Calu3 (cell line): ENCODE measurements at regions of chr6 and their contacts with region 1.

Region 1: GRCh38 chr6:163191704-163192537 is 222.6 kb upstream of the QKI start:
- DNase-seq: no peak
- H3K4me3 Mint-ChIP-seq: no peak overlapping the region
- H3K27ac Mint-ChIP-seq: no peak overlapping the region
- H3K4me1 Mint-ChIP-seq: no peaks in the 10 kb centered on the region
- H3K27me3 Mint-ChIP-seq: no peaks in the 10 kb centered on the region
- CTCF ChIP-seq: no peak

Region 2: DNA sequence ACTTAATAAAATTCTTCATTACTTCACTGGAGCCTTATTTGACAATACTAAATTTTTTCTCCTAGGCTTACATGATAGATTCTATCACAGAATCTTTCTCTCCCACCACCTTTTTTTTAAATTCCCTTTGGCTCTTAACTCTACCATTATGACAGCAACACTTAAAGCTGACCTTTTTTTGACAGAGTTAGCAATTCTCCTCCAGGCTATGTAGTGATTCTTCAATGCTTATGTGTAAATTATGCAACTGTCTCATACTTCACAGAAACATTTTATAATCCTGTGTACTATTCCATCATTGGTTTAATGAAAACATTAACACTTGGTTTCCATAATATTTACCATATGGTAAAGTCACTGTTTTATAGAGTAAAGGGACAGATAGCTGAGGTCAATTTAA is 19.1 kb after region 1 on chr6:
- CTCF ChIA-PET with region 1: interaction called, 4 read pairs
- intact Hi-C with region 1: loop called (anchors 1 kb)
- DNase-seq: no peak
- H3K4me3 Mint-ChIP-seq: no peak overlapping the region
- H3K27ac Mint-ChIP-seq: no peak overlapping the region
- H3K4me1 Mint-ChIP-seq: no peaks in the 10 kb centered on the region
- H3K27me3 Mint-ChIP-seq: no peaks in the 10 kb centered on the region
- CTCF ChIP-seq: no peak